ENCODE measurements at regions of chr1 and their contacts with region 1.

Region 1: DNA sequence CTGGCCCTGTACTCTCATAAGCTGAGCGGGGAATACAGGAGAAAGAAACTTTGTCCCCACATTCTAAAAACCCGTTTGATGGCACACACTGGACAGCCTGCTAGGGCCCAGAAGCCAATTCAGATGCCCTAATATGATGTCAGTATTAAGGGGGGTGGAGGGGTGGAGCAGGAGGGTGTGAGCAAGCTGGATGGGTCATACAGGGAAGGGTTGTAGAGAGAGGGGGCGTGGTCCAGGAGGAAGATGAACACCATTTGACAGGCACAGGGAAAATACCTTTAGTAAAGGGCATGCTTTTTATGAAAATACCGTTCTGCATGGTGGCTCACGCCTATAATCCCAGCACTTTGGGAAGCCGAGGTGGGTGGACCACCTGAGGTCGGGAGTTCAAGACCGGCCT is 5.9 kb downstream of the TARS2 start:
- DNase-seq: no peak
- H3K4me3 ChIP-seq: no peak overlapping the region
- H3K4me3 Mint-ChIP-seq: no peak overlapping the region
- H3K27ac ChIP-seq: no peak overlapping the region
- H3K27ac Mint-ChIP-seq: peak overlapping the region in 1 of 7 donors; percentile 55
- H3K4me1 ChIP-seq: peaks cover 1 to 2% of the 10 kb centered on the region in 2 donors
- H3K4me1 Mint-ChIP-seq: peaks cover under 1% of the 10 kb centered on the region
- H3K27me3 ChIP-seq: no peaks in the 10 kb centered on the region
- H3K27me3 Mint-ChIP-seq: no peaks in the 10 kb centered on the region
- CTCF ChIP-seq: no peak

Region 2: DNA sequence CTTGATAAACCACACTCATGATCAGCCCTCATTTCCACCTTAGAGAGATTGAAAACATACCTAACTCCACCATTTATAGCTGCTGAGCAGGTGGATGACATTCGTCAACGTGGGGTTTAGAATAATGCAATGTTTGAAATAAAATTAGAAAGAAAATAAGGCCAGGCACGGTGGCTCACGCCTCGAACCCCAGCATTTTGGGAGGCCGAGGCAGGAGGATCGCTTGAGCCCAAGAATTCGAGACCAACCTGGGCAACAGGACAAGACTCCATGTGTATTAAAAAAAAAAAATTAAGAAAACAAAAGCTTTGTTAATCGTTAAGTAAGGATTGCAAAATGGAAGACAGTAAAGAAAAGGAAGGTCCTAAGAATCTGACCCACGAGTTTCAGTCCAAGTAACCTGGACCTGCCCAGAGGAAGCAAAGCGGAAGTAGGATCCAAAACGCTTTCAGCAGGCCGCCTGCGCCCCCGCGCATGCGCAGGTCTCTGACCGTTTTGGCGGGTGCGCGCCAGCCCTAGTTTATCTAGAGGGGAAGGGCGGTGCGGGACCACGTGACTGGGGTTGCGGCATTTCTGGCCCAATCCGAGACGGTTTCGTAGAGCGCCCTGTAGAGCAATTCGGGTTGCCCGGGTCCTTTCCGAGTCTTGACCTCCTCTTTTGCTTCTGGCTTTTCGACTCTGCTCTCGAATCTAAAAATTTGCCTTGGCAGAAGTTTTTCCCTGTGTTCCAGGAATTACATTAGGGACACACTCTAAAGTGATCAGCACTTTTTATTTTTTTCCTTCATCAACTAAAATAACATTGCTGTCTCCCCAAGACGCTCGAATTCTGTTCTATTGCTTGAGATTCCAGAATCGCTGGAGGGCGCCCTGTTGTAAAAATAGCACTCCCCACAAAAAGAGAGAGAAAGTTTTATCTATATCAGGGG is 279.7 kb before region 1 on chr1:
- intact Hi-C with region 1: no loop called
- DNase-seq: peak; percentile 95 to 98 (median 97)
- H3K4me3 ChIP-seq: peak overlapping the region; percentile 49 to 82 (median 75)
- H3K4me3 Mint-ChIP-seq: peak overlapping the region; percentile 82 to 88
- H3K27ac ChIP-seq: peak overlapping the region; percentile 53 to 87
- H3K27ac Mint-ChIP-seq: peak overlapping the region; percentile 92 to 96 (median 95)
- H3K4me1 ChIP-seq: peaks cover 10 to 13% of the 10 kb centered on the region in 2 donors
- H3K4me1 Mint-ChIP-seq: peaks cover 17% of the 10 kb centered on the region
- H3K27me3 ChIP-seq: no peaks in the 10 kb centered on the region
- H3K27me3 Mint-ChIP-seq: no peaks in the 10 kb centered on the region
- CTCF ChIP-seq: peak; percentile 58

Region 3: GRCh38 chr1:150259758-150260669 is 233.1 kb before region 1 on chr1:
- intact Hi-C with region 1: no loop called
- DNase-seq: no peak
- H3K4me3 ChIP-seq: no peak overlapping the region
- H3K4me3 Mint-ChIP-seq: peak overlapping the region in 1 of 2 donors; percentile 19
- H3K27ac ChIP-seq: no peak overlapping the region
- H3K27ac Mint-ChIP-seq: no peak overlapping the region
- H3K4me1 ChIP-seq: peaks cover 14 to 15% of the 10 kb centered on the region in 2 donors
- H3K4me1 Mint-ChIP-seq: peaks cover 24% of the 10 kb centered on the region
- H3K27me3 ChIP-seq: peaks cover 38 to 44% of the 10 kb centered on the region in 2 donors
- H3K27me3 Mint-ChIP-seq: peaks cover 42 to 51% (median 48%) of the 10 kb centered on the region in 3 donors
- CTCF ChIP-seq: no peak

Region 4: GRCh38 chr1:150507905-150508854 is 15.0 kb after region 1 on chr1 and contains the start of gene ECM1:
- intact Hi-C with region 1: loop called in 1 of 2 experiments (anchors 1 kb)
- DNase-seq: peak; percentile 18 to 39 (median 37)
- H3K4me3 ChIP-seq: no peak within 1 kb of the TSS
- H3K4me3 Mint-ChIP-seq: no peak within 1 kb of the TSS
- H3K27ac ChIP-seq: no peak within 1 kb of the TSS
- H3K27ac Mint-ChIP-seq: peak within 1 kb of the TSS in 6 of 7 donors; percentile 28 to 80 (median 57)
- H3K4me1 ChIP-seq: peaks cover 4 to 17% of the 10 kb centered on the region in 2 donors
- H3K4me1 Mint-ChIP-seq: peaks cover 14% of the 10 kb centered on the region
- H3K27me3 ChIP-seq: no peaks in the 10 kb centered on the region
- H3K27me3 Mint-ChIP-seq: peaks cover 0 to 1% (median 0%) of the 10 kb centered on the region in 3 donors
- CTCF ChIP-seq: no peak
- polyA plus RNA-seq, gene ECM1: 1.0 TPM in 1 of 3 donors, not detected in the others

Measured in CD14-positive monocyte (primary cell).